Posterior vena cava (tissue), 2 donors: ENCODE measurements at regions of chr1 and their contacts with region 1.

Region 1: DNA sequence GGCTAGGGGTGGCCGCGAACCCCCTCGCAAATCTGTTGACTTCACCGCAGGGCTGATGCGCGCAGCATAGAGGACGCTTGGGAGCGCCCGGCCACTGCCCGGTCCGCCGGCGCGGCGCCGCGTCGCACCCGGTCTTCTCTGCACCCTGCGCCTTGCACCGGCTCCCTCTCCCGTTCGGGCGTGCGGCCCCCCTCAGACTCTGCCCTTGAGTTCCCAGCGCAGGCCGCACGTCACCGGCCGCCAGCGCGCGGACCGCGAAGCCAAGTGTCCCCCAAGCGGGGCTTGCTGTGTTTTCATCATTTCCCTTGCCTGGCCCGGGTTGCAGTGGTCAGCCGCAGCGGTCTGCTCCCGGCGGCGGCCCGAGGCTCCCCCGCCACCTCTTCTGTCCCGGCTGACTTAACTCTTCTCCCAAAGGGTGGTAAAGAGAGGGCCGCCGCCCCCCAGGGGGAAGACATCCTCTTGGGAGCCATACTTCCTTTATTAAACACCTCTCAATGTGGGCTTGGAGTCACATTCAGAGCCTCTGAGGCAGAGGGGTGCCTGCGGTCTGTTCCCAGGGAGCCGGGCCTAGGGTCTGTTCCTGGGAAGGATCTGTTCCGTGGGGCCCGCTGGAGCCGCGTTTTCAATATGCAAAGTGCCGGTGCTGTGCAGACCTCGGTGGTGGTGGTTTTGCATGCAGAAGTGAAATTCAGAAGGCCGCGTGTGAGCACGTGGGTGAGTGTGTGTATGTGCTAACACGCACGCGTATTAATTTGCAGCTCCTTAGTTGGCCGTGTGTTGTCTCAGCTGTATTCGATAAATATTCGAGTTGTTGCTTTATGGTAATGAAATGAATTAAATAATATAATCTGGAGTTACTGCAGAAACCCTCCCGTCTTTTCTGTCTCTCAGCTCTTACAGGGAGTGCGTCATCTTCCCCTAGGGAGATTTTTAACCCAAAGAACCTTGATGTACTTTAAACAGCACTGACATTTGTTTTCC is 17.6 kb downstream of the PBX1 start:
- DNase-seq: no peak

Region 2: GRCh38 chr1:164602480-164603093 is 26.0 kb after region 1 on chr1:
- intact Hi-C with region 1: loop called in 1 of 2 experiments (anchors 1 kb)
- DNase-seq: no peak

Region 3: GRCh38 chr1:164716992-164717703 is 140.6 kb after region 1 on chr1:
- intact Hi-C with region 1: loop called in 1 of 2 experiments (anchors 10 kb)
- DNase-seq: no peak

Region 4: GRCh38 chr1:164786980-164787833 is 210.6 kb after region 1 on chr1:
- intact Hi-C with region 1: loop called in 1 of 2 experiments (anchors 5 kb)
- DNase-seq: peak; percentile 93

Region 5: GRCh38 chr1:164803366-164803765 is 226.8 kb after region 1 on chr1:
- intact Hi-C with region 1: no loop called
- DNase-seq: no peak